ENCODE measurements at regions of chr3 and their contacts with region 1.

Region 1: GRCh38 chr3:188052169-188053030 is 101.6 kb upstream of the LPP start:
- DNase-seq: peak; percentile 83 to 100 (median 97)

Region 2: DNA sequence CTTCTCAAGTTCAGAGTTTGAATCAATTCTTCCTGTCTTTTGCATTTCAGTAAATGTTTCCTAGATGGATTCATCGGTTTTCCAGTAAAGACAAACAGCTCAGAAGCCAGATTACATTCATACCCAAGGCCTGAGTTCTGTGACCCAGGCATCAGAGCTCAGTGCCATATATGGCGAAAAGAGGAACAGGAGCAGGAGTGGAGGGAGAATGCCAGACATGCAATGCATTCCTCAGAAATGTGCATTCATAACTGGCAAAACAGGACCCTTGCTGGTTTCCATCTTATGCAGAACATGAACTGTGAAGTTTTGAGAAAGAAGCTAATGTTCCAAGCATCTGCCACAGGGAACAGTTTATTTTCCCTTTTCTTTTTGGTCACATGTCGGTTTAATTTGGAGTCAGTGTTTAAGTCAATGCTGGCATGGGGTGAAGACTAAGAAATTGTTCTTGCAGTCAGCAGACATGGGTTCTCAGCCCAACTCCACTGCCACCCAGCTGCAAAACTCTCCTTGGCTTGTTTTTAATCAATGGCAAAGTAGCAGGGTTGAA is 218.1 kb after region 1 on chr3:
- intact Hi-C with region 1: loop called (anchors 10 kb)
- DNase-seq: peak in 4 of 42 donors; percentile 26 to 54 (median 39)

Measured in head of caudate nucleus (tissue), 42 donors.